ENCODE measurements at regions of chr2 and their contacts with region 1.

Region 1: GRCh38 chr2:27133905-27134780 is at the start of gene PREB:
- DNase-seq: peak; percentile 98 to 99
- ATAC-seq: peak; percentile 91 to 95 (median 93)
- H3K4me3 ChIP-seq: peak within 1 kb of the TSS; percentile 92
- H3K27ac ChIP-seq: peak within 1 kb of the TSS; percentile 94
- H3K4me1 ChIP-seq: peaks cover 12% of the 10 kb centered on the region
- H3K27me3 ChIP-seq: no peaks in the 10 kb centered on the region
- CTCF ChIP-seq: no peak
- total RNA-seq, gene PREB: 57.4 to 206 (median 111) TPM

Region 2: DNA sequence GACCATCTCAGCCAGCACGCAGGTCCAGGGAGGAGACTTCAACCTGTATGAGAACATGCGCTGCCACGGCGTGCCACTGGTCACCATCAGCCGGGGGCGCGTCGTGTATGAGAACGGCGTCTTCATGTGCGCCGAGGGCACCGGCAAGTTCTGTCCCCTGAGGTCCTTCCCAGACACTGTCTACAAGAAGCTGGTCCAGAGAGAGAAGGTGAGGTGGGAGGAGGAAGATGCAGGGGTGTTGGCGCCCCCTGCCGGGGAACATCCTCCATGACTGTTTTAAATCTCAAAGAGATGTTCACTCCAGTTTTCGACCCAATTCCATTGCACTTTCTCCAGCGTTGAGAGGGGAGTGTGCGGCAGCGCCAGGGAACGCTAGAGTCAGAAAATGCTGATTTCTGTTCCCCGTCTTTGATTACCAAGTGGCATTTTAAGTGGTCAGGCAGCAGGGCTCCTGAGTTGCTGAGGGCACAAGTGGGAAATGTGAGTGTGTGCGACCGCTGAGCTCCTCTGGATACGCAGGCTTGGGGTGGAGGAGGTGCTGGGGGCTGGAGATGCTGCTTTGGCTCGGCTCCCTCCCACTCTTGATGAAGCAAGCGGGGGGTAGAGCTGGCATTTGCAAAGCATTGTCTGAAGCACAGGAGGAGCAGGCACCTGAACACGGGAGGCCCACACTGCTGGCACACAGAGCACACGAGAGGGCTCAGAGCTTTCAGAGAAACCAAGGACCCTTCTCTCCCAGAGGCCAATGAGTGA is 191.4 kb before region 1 on chr2:
- intact Hi-C with region 1: no loop called
- DNase-seq: peak; percentile 60 to 75
- ATAC-seq: peak; percentile 58 to 89 (median 67)
- H3K4me3 ChIP-seq: no peak overlapping the region
- H3K27ac ChIP-seq: no peak overlapping the region
- H3K4me1 ChIP-seq: no peaks in the 10 kb centered on the region
- H3K27me3 ChIP-seq: peaks cover 0 to 2% (median 0%) of the 10 kb centered on the region in 3 donors
- CTCF ChIP-seq: peak; percentile 81

Region 3: DNA sequence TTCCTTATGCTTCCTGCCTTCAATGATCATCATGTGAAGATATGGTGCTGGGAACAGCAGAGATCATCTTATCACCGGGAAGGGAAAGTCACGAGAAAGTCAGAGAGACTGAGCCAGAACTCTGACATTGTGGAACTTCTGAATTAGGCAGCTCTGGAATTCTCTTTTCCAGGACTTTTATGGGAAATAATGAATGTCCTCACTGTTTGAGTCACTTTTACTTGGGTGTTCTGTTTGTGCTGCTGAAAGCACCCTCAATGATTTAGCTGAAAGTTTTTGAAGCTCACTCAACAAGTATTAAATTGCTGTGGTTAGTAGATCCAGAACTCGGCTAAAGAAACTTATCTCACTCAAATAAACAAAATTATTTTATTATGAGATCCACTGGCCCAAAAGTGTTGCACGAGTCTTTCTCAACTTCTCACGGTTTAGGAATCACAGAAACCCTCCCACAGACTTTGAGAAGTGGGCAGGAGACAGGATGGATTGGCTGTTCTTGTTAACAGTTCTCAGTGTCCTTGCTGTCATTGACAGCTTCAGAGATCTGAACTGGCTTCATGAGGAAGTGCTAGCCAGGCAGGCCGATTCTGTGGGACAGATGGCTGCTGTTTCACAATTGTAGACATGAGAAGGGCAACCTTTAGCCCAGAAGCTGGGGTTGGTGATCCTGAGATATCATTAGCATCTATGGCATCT is 51.3 kb after region 1 on chr2:
- intact Hi-C with region 1: no loop called
- DNase-seq: peak; percentile 61 to 75
- ATAC-seq: peak; percentile 89 to 94 (median 90)
- H3K4me3 ChIP-seq: peak overlapping the region; percentile 10
- H3K27ac ChIP-seq: peak overlapping the region; percentile 77
- H3K4me1 ChIP-seq: peaks cover 31% of the 10 kb centered on the region
- H3K27me3 ChIP-seq: no peaks in the 10 kb centered on the region
- CTCF ChIP-seq: no peak

Region 4: GRCh38 chr2:27211829-27212627 is 77.9 kb after region 1 on chr2 and contains the starts of genes ATRAID and SLC5A6:
- intact Hi-C with region 1: loop called in 1 of 2 experiments (anchors 5 kb)
- DNase-seq: peak; percentile 91 to 95
- ATAC-seq: peak; percentile 93 to 96 (median 94)
- H3K4me3 ChIP-seq: peak within 1 kb of the TSS; percentile 98
- H3K27ac ChIP-seq: peak within 1 kb of the TSS; percentile 100
- H3K4me1 ChIP-seq: peaks cover 17% of the 10 kb centered on the region
- H3K27me3 ChIP-seq: no peaks in the 10 kb centered on the region
- CTCF ChIP-seq: no peak
- total RNA-seq, gene ATRAID: 87.1 to 113 (median 98.2) TPM
- total RNA-seq, gene SLC5A6: 16.8 to 64.2 (median 21.1) TPM

Region 5: GRCh38 chr2:27241761-27242613 is 107.8 kb after region 1 on chr2:
- intact Hi-C with region 1: no loop called
- DNase-seq: peak in 1 of 2 donors; percentile 37
- ATAC-seq: no peak
- H3K4me3 ChIP-seq: no peak overlapping the region
- H3K27ac ChIP-seq: no peak overlapping the region
- H3K4me1 ChIP-seq: no peaks in the 10 kb centered on the region
- H3K27me3 ChIP-seq: no peaks in the 10 kb centered on the region
- CTCF ChIP-seq: no peak

Measured in psoas muscle (tissue), 8 donors.